Transverse colon (tissue), 4 donors: ENCODE measurements at regions of chr15 and their contacts with region 1.

Region 1: DNA sequence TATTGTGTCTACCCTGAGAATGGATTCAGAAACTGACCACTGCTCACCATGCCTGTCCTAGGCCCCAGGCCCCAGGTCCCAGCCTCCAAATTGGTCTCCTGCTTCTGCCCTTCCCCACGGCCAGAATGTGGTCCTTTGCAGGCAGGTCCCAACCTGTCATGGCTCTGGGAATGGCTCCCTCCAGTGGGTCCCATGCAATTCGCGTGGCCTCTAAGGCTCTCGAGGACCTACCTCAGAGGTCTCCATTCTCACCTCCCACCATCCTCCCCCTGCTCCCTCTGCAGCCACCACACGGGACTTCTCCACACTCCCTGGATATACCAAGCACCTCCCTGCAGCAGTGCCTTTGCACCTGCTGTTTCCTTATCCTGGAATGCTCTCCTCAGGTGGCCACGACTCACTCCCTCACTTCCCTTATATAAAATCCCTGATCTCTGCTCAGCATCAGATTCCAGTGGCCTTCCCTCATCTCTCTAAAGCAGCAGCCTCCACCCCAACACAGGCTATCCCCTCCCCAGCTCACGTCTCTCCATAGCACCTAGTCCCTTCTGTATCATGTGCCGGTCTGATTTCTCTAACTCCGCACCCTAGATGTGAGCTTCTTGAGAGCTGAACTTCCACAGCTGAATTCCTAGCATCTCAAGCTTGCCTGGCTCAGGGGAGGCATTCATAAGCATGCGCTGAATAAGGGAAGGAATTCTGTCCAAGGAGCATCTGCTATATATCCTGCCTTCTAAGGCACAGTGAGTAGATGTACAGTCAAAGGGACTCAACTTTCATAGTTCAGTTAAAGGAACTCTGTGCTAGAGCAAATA is 56.9 kb downstream of the ARRDC4 start:
- DNase-seq: no peak
- H3K4me3 ChIP-seq: peak overlapping the region in 2 of 4 donors; percentile 11 to 27
- H3K27ac ChIP-seq: peak overlapping the region; percentile 58 to 79 (median 72)
- H3K4me1 ChIP-seq: peaks cover 0 to 15% (median 8%) of the 10 kb centered on the region in 4 donors
- H3K27me3 ChIP-seq: no peaks in the 10 kb centered on the region
- CTCF ChIP-seq: no peak
- EP300 ChIP-seq: peak; percentile 19
- POLR2A ChIP-seq: peak; percentile 25

Region 2: GRCh38 chr15:97960364-97961066 is 56.8 kb before region 1 on chr15 and contains the start of gene ARRDC4:
- in situ Hi-C with region 1: no loop called
- intact Hi-C with region 1: loop called (anchors 5 kb)
- DNase-seq: peak; percentile 100
- H3K4me3 ChIP-seq: peak within 1 kb of the TSS; percentile 90 to 99 (median 96)
- H3K27ac ChIP-seq: peak within 1 kb of the TSS; percentile 96 to 99 (median 98)
- H3K4me1 ChIP-seq: peaks cover 15 to 45% (median 36%) of the 10 kb centered on the region in 4 donors
- H3K27me3 ChIP-seq: no peaks in the 10 kb centered on the region
- CTCF ChIP-seq: no peak
- EP300 ChIP-seq: no peak
- POLR2A ChIP-seq: peak; percentile 81
- total RNA-seq, gene ARRDC4: 35.9 to 188 (median 70.7) TPM

Region 3: GRCh38 chr15:98043160-98044014 is 26.0 kb after region 1 on chr15:
- in situ Hi-C with region 1: no loop called
- intact Hi-C with region 1: no loop called
- DNase-seq: no peak
- H3K4me3 ChIP-seq: no peak overlapping the region
- H3K27ac ChIP-seq: no peak overlapping the region
- H3K4me1 ChIP-seq: no peaks in the 10 kb centered on the region
- H3K27me3 ChIP-seq: no peaks in the 10 kb centered on the region
- CTCF ChIP-seq: no peak
- EP300 ChIP-seq: no peak
- POLR2A ChIP-seq: no peak